Gastrocnemius medialis (tissue), 4 donors: ENCODE measurements at regions of chr5 and their contacts with region 1.

Region 1: DNA sequence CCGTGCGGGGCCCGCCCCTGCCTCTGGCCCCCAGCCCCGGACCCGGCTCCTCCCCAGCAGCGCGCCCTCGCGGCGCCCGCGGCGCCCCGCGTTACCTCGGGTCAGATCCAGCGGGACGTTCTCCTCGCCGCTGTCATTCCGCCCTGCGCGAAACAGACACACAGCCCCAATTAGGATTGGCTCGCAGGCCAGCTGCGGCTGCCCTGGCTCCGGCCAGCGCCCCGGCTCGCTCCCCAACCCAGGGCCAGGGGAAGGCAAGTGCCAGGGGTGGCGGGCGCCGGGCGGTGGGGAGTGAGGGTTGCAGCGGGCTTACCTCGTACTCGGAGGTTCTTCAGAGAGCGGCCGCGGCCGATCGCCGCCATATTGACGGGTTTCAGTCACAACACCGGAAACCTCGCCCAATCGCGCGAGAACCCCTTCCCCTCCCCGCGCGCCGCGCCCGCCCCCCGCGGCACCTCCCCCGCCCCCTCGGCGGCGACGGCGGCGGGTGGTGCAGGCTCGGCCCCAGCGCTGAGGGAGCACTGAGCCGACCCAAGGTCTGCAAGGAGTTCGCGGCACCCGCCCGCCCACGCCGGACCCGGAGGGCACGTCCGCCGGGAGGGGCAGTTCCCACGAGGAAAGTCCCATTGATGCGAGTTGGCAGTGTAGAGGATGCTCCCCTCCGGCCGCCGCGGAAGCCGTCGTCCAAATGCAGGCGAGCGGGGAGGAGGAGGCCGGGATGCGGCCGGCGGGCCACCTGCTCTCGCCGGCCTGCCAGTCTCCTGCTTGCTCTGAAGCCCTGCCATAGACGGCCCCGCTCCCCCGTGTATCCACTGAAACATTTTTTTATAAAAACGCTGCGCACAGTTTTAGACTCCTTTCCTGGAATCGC is at the start of gene RICTOR:
- DNase-seq: peak; percentile 81 to 85
- ATAC-seq: peak; percentile 84 to 86
- H3K4me3 ChIP-seq: peak within 1 kb of the TSS; percentile 89 to 95 (median 94)
- H3K27ac ChIP-seq: peak within 1 kb of the TSS; percentile 98 to 100 (median 99)
- H3K4me1 ChIP-seq: peaks cover 40 to 45% of the 10 kb centered on the region in 2 donors
- H3K27me3 ChIP-seq: no peaks in the 10 kb centered on the region
- CTCF ChIP-seq: no peak
- POLR2A ChIP-seq: peak; percentile 71 to 87
- total RNA-seq, gene RICTOR: 28.9 to 56.9 (median 37.0) TPM

Region 2: DNA sequence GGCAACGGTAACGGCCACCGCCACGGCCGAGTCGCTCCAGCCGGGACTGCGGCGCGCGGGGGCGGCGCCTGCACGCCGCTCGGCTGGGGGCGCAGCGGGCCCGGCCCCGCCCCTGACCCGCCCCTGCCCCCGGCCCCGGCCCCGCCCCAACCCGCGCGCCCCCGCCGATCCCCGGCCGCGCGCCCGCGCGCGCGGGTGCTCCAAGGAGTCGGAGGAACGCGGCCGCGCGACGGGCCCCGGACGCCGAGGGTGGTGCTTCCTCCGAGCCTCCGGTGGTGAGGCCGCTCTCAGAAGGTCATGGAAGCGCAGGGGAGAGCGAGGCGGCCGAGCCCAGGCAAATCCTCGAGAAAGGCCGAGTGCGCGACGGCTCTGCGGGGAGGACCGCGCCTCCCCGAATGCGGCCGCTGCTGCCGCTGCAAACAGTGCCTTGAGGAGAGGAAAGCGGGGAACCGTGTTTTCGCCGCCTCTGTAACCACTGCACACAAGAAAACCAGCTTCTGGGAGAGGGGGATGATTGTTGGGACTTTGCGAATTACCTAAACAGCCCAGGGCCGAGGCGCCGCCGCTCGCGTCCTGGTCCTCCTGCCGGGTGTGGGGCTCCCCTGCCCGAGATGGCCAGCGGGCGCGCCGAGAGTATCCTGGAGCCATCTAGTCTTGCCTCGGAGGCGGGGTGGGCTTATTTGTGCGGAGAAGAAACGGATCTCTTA is 517.5 kb before region 1 on chr5 and contains the start of gene LIFR:
- in situ Hi-C with region 1: no loop called
- intact Hi-C with region 1: loop called (anchors 10 kb)
- DNase-seq: peak; percentile 59 to 79
- ATAC-seq: peak; percentile 79 to 88
- H3K4me3 ChIP-seq: peak within 1 kb of the TSS; percentile 89 to 94 (median 92)
- H3K27ac ChIP-seq: peak within 1 kb of the TSS; percentile 97 to 99 (median 98)
- H3K4me1 ChIP-seq: peaks cover 19 to 51% of the 10 kb centered on the region in 2 donors
- H3K27me3 ChIP-seq: no peaks in the 10 kb centered on the region
- CTCF ChIP-seq: peak in 2 of 5 experiments; percentile 18 to 25
- POLR2A ChIP-seq: peak; percentile 77 to 86
- total RNA-seq, gene LIFR: 80.0 to 233 (median 89.5) TPM

Region 3: DNA sequence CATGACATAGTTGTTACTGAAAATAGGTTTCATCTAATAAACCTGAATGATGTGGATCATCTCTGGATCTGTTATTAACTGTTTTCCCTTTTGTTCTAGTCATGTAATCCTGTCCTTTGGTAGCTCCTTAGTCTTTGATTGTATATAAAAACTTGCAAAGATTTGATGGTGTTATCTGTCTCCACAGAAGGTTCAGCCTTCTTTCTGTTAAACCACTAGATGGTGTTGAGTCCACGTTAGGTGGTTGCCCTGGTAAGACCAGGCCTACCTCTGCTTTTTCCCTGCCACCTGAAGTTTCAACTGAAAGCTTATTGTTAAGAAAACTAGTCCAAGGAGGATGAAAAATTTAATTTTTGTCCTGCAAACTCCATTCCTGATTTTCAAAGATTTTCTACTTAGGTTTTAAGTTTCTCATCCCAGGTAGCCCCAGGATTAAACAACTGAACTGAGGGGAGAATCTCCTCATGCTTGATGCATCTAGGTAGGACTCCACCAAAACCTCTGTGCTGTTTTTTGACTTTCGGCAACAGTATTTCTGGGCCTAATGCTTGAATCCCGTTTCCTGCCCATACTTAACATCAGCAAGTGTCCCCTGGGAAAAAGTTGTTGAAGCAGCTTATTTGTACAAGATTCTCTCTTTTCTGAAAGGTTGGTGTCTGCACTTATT is 68.6 kb before region 1 on chr5:
- in situ Hi-C with region 1: loop called in 2 of 4 experiments (anchors 5 to 10 kb)
- intact Hi-C with region 1: no loop called
- DNase-seq: no peak
- ATAC-seq: peak; percentile 69 to 71
- H3K4me3 ChIP-seq: no peak overlapping the region
- H3K27ac ChIP-seq: peak overlapping the region in 1 of 4 donors; percentile 18
- H3K4me1 ChIP-seq: peaks cover 0 to 5% of the 10 kb centered on the region in 2 donors
- H3K27me3 ChIP-seq: no peaks in the 10 kb centered on the region
- CTCF ChIP-seq: peak; percentile 16 to 53 (median 48)
- POLR2A ChIP-seq: no peak